Activated T-helper 1 cell treated with anti-CD3 and anti-CD28 coated beads, Interleukin-12 subunit alpha, Interleukin-12 subunit beta, Interleukin-2, Interleukin-4 antibody, amounts not matched to agents 30 ng/mL and 10 ng/mL and 1 ng/mL, durations not matched to agents 14 hours and 24 hours and 36 hours (primary cell): ENCODE measurements at regions of chr7 and their contacts with region 1.

Region 1: DNA sequence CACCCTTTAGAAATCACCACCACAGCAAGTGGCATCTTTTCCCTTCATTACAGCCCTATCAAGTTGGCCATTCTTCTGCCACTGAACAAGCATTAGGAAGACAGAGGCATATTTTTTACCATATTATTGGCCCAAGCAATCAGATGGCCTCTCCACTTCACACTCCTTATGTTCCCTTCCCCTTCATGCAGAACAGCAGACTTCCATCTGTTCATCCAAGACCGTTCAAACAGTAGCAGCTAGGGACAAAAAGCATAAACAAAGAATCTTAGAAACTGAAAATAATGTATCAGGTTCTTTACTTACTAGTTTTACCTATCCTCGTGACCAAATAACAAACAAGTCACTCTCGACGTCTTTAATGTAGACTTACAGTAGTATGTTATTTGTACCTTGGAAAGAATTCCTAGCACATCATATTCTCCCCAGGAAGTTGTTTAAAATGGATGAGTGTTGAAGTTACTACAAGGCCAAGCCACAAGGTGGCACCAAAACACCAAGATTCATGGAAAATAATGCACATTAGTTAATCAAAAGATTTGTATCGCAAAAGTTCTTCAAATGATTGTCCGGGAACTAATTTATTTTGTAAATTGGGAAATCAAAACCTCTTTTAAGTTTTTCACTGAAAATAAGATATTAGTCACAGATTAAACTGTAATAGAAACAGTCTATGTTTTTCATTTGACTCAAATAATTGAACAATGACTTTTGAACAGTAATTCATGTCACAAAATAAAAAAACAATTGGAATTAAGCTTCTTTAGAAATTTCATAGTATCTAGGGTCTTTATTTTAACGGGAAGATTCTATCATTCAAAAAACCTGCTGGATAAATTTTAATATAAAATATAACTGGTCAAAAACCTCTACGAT is 112.1 kb downstream of the VPS41 start:
- DNase-seq: peak; percentile 17
- H3K4me3 Mint-ChIP-seq: no peak overlapping the region
- H3K27ac Mint-ChIP-seq: no peak overlapping the region
- H3K4me1 Mint-ChIP-seq: no peaks in the 10 kb centered on the region
- H3K27me3 Mint-ChIP-seq: no peaks in the 10 kb centered on the region

Region 2: GRCh38 chr7:38781991-38782390 is 14.9 kb before region 1 on chr7:
- intact Hi-C with region 1: no loop called
- DNase-seq: no peak
- H3K4me3 Mint-ChIP-seq: no peak overlapping the region
- H3K27ac Mint-ChIP-seq: no peak overlapping the region
- H3K4me1 Mint-ChIP-seq: no peaks in the 10 kb centered on the region
- H3K27me3 Mint-ChIP-seq: no peaks in the 10 kb centered on the region

Region 3: GRCh38 chr7:38908759-38909335 is 112.0 kb after region 1 on chr7 and contains the start of gene VPS41:
- intact Hi-C with region 1: loop called (anchors 2 kb)
- DNase-seq: peak; percentile 72
- H3K4me3 Mint-ChIP-seq: peak within 1 kb of the TSS; percentile 97
- H3K27ac Mint-ChIP-seq: peak within 1 kb of the TSS; percentile 93
- H3K4me1 Mint-ChIP-seq: peaks cover 38% of the 10 kb centered on the region
- H3K27me3 Mint-ChIP-seq: peaks cover 2% of the 10 kb centered on the region
- total RNA-seq, gene VPS41: 52.9 and 56.3 TPM in 2 replicates

Region 4: GRCh38 chr7:38932509-38933168 is 135.8 kb after region 1 on chr7:
- intact Hi-C with region 1: loop called (anchors 1 kb)
- DNase-seq: peak; percentile 15
- H3K4me3 Mint-ChIP-seq: no peak overlapping the region
- H3K27ac Mint-ChIP-seq: no peak overlapping the region
- H3K4me1 Mint-ChIP-seq: peaks cover 7% of the 10 kb centered on the region
- H3K27me3 Mint-ChIP-seq: peaks cover 7% of the 10 kb centered on the region

Region 5: DNA sequence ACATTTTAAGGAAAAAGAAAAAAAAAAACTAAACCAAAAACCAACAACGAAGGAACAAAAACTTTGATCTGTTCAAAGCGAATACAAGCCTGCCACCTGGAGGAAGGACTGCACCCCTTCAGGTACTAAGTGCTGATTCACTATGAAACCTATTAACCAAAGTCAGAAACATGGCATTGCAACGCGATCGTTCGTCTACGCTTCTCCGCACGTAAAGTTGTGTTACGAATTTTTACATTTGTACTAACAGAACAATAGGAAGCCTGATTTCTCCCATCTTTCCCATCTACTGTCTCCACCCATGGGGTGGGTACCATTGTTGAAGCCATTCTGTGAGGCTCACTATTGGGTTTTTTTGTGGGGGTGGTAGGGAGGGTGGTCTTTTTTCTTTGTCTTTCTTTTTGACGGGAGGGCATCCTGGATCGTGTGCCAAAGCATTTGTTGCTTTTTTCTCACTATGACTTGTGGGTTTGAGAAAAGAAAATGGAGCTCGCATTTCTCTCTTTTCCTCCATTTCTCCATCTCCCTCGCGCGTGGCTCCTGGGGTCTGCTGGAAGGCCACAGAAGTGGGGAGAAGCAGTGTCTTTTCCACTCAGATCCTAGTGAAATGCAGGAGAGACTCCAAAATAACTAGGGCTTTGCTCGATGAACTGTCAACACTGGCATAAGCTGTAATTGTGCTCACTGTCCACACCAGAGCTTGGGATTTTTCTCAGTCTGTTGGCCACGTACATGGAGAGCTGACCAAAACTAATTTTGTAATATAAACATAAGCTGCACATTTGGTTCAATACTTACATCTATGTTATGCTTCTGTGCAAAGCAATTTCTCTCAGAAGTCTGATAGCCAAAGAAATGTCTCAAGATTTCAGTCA is 668.4 kb after region 1 on chr7:
- intact Hi-C with region 1: loop called (anchors 1 kb)
- DNase-seq: peak; percentile 8
- H3K4me3 Mint-ChIP-seq: no peak overlapping the region
- H3K27ac Mint-ChIP-seq: no peak overlapping the region
- H3K4me1 Mint-ChIP-seq: peaks cover 18% of the 10 kb centered on the region
- H3K27me3 Mint-ChIP-seq: peaks cover 20% of the 10 kb centered on the region